Caki2 (cell line): ENCODE measurements at regions of chr4 and their contacts with region 1.

Region 1: GRCh38 chr4:176340871-176341685 is 21.3 kb downstream of the SPCS3 start:
- DNase-seq: peak; percentile 53

Region 2: GRCh38 chr4:175916626-175917351 is 424.3 kb before region 1 on chr4:
- in situ Hi-C with region 1: loop called (anchors 25 kb)
- DNase-seq: peak; percentile 80

Region 3: DNA sequence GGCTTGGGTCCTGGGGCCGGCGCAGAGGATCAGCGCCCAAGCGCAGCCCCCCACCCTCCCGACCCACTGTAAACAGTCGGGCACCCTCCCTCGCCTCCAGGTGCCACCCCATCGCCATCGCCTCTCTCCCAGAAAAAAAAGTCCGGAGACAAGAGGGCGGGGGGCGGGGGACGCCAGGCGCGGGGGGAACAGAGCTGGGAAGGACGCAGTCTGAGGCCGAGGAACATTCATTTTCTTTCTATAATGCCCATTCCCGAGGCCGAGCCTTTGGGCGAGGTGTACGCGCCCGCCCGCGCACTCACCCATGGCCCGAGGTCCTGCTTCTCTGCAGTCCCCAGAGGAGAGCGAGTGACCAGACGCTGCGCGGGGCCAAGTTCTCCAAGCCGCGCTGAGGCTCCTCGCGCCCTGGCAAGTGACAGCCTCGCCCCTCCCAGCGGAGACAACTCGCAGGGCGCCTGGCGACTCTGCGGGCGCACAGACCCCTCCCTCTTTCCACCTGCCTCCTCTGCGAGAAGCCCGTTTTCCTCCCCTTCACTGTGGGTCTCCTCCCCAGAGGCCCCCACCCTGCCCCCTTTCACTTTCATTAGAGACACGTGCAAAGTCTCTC is 339.0 kb before region 1 on chr4:
- in situ Hi-C with region 1: loop called (anchors 25 kb)
- DNase-seq: peak; percentile 15

Region 4: DNA sequence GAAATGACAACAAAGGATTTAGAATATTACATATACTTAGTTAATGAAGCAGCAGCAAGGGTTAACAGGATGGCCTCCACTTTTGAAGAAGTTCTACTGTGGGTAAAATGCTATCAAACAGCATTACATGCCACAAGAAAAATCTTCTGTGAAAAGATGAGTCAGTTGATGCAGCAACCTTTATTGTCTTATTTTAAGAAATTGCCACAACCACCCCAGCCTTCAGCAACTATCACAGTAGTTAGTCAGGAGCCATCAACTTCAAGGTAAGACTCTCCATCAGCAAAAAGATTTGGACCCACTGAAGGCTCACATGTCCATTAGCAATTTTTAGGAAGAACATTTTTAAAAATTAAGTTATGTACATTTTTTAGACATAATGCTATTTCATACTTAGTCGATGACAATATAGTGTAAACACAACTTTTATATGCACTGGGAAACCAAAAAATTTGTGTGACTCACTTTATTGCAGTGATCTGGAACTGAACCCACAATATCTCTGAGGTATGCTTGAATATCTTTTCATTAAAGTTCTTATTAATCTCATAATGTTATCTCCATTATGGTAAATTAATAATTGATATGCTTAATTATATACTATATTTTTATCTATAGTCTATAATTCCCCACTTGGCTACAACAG is 59.9 kb after region 1 on chr4:
- in situ Hi-C with region 1: no loop called
- DNase-seq: no peak

Region 5: DNA sequence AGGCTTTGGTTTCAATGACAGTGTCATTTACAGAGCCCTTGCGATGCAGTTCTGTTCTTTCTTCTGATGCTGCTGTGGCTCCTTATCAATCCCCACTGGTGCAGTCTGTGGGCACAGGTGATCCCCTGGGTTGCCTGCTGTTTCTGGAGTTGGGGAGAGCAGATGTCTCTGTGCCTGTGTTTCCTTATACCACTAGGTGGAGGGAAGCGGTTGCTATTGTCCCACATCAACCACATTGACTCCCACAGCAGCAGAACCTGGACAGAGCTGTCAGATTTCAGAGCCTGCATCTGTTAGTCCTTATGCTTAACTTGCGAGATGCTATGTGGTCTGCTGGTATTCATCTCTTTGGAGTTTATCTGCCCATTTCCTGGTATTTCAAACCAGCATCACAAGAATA is 1026.3 kb after region 1 on chr4:
- in situ Hi-C with region 1: no loop called
- DNase-seq: peak; percentile 13